ENCODE measurements at regions of chr15 and their contacts with region 1.

Region 1: DNA sequence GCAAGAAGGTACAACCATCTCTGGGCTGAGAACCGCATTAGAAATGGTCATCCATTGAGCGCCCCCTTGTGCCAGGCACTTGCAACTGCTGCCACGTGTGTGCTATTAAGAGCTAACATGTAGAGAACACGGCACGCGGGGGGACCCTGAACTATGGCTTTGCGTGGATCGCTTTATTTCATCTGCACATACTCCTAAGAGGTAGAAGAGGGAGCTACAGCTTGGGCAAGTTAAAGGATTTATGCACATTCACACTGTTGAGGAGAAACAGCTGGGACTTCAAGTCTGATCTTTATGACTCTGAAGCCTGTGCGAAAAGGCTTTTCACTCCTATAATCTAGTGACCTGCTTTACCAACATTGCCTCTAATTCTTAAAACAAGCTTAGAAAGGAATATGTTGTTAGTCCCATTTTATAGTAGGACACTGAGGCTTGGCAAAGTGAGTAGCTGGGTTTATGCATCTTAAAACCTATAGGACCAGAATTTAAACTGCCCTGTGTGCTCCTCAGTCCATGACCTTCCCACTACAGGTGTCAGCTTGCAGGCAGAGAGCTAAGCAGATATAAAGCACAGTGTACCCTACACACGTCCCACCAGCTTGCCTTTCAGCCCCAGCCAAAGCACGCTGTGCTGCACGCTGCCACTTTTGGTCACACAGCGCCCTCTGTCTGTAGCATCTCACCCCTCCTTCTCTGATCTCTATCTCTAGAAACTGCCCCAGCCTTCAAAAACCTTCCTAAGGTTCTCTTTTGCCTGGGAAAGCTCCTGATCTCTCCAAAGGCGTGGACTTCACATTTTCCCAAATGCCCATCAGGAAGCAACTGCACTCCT is 57.8 kb downstream of the STARD5 start:
- DNase-seq: peak; percentile 64
- ATAC-seq: peak; percentile 92
- H3K4me3 Mint-ChIP-seq: peak overlapping the region; percentile 69
- H3K27ac Mint-ChIP-seq: no peak overlapping the region
- H3K4me1 Mint-ChIP-seq: peaks cover 19% of the 10 kb centered on the region
- H3K27me3 Mint-ChIP-seq: no peaks in the 10 kb centered on the region
- CTCF ChIP-seq: no peak

Region 2: GRCh38 chr15:80776420-80777045 is 489.6 kb before region 1 on chr15:
- CTCF ChIA-PET with region 1: interaction called, 12 read pairs
- POLR2A ChIA-PET with region 1: no interaction called
- intact Hi-C with region 1: loop called (anchors 5 kb)
- DNase-seq: peak; percentile 27
- ATAC-seq: peak; percentile 62
- H3K4me3 Mint-ChIP-seq: no peak overlapping the region
- H3K27ac Mint-ChIP-seq: no peak overlapping the region
- H3K4me1 Mint-ChIP-seq: peaks cover 8% of the 10 kb centered on the region
- H3K27me3 Mint-ChIP-seq: peaks cover 24% of the 10 kb centered on the region
- CTCF ChIP-seq: no peak

Region 3: GRCh38 chr15:81000624-81001151 is 265.5 kb before region 1 on chr15 and contains the start of gene TLNRD1:
- CTCF ChIA-PET with region 1: interaction called, 14 read pairs
- POLR2A ChIA-PET with region 1: interaction called, 4 read pairs
- intact Hi-C with region 1: loop called (anchors 1 kb)
- DNase-seq: peak; percentile 80
- ATAC-seq: peak; percentile 65
- H3K4me3 Mint-ChIP-seq: peak within 1 kb of the TSS; percentile 94
- H3K27ac Mint-ChIP-seq: peak within 1 kb of the TSS; percentile 96
- H3K4me1 Mint-ChIP-seq: peaks cover 47% of the 10 kb centered on the region
- H3K27me3 Mint-ChIP-seq: no peaks in the 10 kb centered on the region
- CTCF ChIP-seq: no peak
- total RNA-seq, gene TLNRD1: 25.7 TPM in 2 replicates

Region 4: GRCh38 chr15:81176291-81176893 is 89.8 kb before region 1 on chr15:
- CTCF ChIA-PET with region 1: interaction called, 10 read pairs
- POLR2A ChIA-PET with region 1: no interaction called
- intact Hi-C with region 1: no loop called
- DNase-seq: no peak
- ATAC-seq: no peak
- H3K4me3 Mint-ChIP-seq: no peak overlapping the region
- H3K27ac Mint-ChIP-seq: no peak overlapping the region
- H3K4me1 Mint-ChIP-seq: no peaks in the 10 kb centered on the region
- H3K27me3 Mint-ChIP-seq: peaks cover 11% of the 10 kb centered on the region
- CTCF ChIP-seq: no peak

Region 5: DNA sequence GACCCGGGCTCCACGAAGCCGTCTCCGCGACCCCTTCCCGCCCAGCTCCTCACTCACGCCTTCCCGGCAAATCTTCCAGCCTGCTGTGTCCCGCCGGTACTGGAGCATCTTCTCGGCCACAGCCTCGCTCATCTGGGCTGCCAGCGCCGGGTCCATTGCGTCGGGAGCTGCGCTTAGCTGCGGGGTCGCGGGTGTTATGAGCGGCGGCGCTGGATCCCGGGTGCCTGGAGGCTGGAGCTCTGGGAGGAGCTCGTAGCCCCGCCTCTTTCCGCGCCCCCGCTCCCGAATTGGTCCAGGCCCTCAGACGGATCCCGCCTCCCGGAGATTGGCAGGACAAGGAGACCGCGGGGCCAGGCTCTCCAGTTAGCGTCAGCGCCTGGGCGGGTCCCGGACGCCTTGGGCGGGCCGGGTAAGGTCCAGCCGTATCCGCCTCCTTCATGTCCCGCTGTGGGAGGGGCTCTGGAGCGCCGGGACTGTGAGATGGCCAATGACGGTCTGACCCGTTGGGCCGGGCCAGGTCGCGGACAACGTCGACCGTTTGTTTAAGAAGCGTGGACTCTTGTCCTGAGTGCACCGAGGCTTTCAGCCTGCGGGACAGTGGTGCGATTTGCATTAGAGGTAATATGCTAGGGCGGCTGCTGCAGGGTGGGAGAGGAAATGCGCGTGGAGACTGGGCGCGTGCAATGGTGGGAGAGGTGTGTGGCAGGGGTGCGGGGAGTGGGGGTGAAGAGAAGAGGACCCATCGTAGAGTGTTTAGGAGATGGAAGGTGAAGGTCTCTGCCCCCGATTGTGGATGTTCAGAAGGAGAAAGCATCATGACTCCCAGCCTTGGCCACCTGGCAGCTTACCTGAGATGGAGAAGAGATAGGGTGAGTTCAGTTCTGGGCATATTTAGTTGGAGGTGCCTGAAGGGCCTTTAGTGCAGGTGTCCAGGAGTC is 58.1 kb after region 1 on chr15 and contains the start of gene STARD5:
- CTCF ChIA-PET with region 1: interaction called, 16 read pairs
- POLR2A ChIA-PET with region 1: interaction called, 3 read pairs
- intact Hi-C with region 1: no loop called
- DNase-seq: peak; percentile 89
- ATAC-seq: peak; percentile 99
- H3K4me3 Mint-ChIP-seq: peak within 1 kb of the TSS; percentile 97
- H3K27ac Mint-ChIP-seq: peak within 1 kb of the TSS; percentile 80
- H3K4me1 Mint-ChIP-seq: peaks cover 35% of the 10 kb centered on the region
- H3K27me3 Mint-ChIP-seq: no peaks in the 10 kb centered on the region
- CTCF ChIP-seq: no peak
- total RNA-seq, gene STARD5: 10.5 and 14.3 TPM in 2 replicates

Region 6: GRCh38 chr15:81589671-81590070 is 323.5 kb after region 1 on chr15:
- CTCF ChIA-PET with region 1: no interaction called
- POLR2A ChIA-PET with region 1: no interaction called
- intact Hi-C with region 1: no loop called
- DNase-seq: no peak
- ATAC-seq: no peak
- H3K4me3 Mint-ChIP-seq: no peak overlapping the region
- H3K27ac Mint-ChIP-seq: no peak overlapping the region
- H3K4me1 Mint-ChIP-seq: peaks cover 6% of the 10 kb centered on the region
- H3K27me3 Mint-ChIP-seq: no peaks in the 10 kb centered on the region
- CTCF ChIP-seq: no peak